MCF 10A (cell line): ENCODE measurements at regions of chr19 and their contacts with region 1.

Region 1: GRCh38 chr19:15264061-15264932 is 32.0 kb upstream of the EPHX3 start:
- DNase-seq: peak; percentile 73
- H3K4me3 Mint-ChIP-seq: no peak overlapping the region
- H3K27ac Mint-ChIP-seq: no peak overlapping the region
- H3K4me1 Mint-ChIP-seq: peaks cover 25% of the 10 kb centered on the region
- H3K27me3 Mint-ChIP-seq: no peaks in the 10 kb centered on the region
- CTCF ChIP-seq: peak; percentile 72

Region 2: GRCh38 chr19:15237759-15238340 is 26.4 kb before region 1 on chr19:
- CTCF ChIA-PET with region 1: no interaction called
- POLR2A ChIA-PET with region 1: no interaction called
- intact Hi-C with region 1: no loop called
- DNase-seq: no peak
- H3K4me3 Mint-ChIP-seq: no peak overlapping the region
- H3K27ac Mint-ChIP-seq: no peak overlapping the region
- H3K4me1 Mint-ChIP-seq: peaks cover 5% of the 10 kb centered on the region
- H3K27me3 Mint-ChIP-seq: no peaks in the 10 kb centered on the region
- CTCF ChIP-seq: no peak

Region 3: GRCh38 chr19:15251749-15252397 is 12.4 kb before region 1 on chr19:
- CTCF ChIA-PET with region 1: interaction called, 25 read pairs
- POLR2A ChIA-PET with region 1: interaction called, 4 read pairs
- intact Hi-C with region 1: no loop called
- DNase-seq: peak; percentile 97
- H3K4me3 Mint-ChIP-seq: no peak overlapping the region
- H3K27ac Mint-ChIP-seq: no peak overlapping the region
- H3K4me1 Mint-ChIP-seq: peaks cover 22% of the 10 kb centered on the region
- H3K27me3 Mint-ChIP-seq: no peaks in the 10 kb centered on the region
- CTCF ChIP-seq: peak; percentile 26

Region 4: DNA sequence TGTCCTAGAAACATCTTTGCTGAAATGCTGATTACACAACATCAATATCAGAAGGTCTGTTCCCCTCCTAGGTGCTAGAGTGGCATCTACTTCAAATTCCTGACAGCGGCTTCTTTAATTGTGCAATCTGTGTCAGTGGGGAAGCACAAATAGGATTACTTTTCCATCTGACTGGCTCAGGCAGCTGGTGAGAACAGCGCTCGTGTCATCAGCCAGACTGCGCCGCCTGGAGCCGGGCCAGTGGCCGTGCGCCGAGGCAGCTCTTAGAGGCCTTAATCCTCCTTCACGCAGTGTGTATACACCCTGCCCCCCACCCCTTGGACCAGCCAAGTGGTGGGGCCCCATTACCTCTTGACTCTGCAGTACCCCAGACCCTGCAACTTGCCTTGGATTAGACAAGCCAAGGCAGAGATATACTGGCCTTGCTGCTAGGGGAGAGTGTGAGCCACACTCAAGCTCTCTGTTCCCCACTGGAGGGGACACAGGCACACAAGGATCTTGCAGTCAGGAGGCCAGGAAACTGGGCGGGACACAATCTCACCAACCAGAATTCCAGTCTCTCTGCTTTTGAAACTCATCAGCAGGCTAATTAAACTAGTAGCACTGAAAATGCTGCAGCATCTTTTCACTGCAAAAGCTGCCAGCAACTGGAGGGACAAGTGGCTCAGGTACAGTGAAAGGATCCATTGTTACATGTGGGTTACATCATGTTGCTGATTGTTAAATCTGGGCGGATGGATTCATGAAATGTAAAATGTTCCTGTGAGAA is 16.8 kb after region 1 on chr19:
- CTCF ChIA-PET with region 1: interaction called, 4 read pairs
- POLR2A ChIA-PET with region 1: interaction called, 10 read pairs
- intact Hi-C with region 1: no loop called
- DNase-seq: peak; percentile 91
- H3K4me3 Mint-ChIP-seq: peak overlapping the region; percentile 17
- H3K27ac Mint-ChIP-seq: peak overlapping the region; percentile 63
- H3K4me1 Mint-ChIP-seq: peaks cover 57% of the 10 kb centered on the region
- H3K27me3 Mint-ChIP-seq: no peaks in the 10 kb centered on the region
- CTCF ChIP-seq: no peak

Region 5: DNA sequence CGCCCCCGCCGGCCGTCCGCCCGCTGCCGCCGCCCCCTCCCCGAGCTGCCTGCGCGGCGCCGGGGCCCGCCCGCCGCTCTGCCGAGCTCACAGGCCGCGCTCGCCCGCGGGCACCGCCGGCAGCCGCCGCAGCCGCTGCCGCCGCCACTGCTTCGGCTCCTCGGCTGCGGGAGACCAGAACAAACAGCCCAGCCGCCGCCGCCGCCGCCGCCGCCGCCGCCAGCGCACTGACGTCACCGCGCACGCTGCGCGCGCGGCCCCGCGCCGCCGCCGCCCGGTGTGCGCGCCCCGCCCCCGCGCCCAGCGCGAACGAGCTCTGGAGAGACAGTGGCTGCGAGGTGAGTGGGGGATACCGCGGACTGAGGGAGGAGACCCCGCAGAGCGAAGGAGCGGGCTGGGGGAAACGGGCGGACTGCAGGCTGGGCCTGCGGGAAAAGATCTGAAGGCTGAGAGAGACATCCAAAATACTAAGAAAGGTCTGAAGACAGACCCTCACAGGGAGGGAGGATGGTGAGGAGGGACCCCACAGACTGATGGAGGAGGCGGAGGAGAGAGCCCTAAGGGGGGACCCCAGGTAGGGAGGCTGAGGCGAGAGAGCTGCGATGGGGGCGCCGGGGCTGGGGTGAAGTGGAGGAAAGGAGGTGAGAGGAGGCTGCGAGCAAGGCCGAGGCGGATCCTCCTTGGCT is 68.2 kb after region 1 on chr19 and contains the start of gene BRD4:
- CTCF ChIA-PET with region 1: no interaction called
- POLR2A ChIA-PET with region 1: interaction called, 4 read pairs
- intact Hi-C with region 1: loop called (anchors 1 kb)
- DNase-seq: peak; percentile 52
- H3K4me3 Mint-ChIP-seq: peak within 1 kb of the TSS; percentile 97
- H3K27ac Mint-ChIP-seq: peak within 1 kb of the TSS; percentile 91
- H3K4me1 Mint-ChIP-seq: peaks cover 9% of the 10 kb centered on the region
- H3K27me3 Mint-ChIP-seq: no peaks in the 10 kb centered on the region
- CTCF ChIP-seq: no peak
- total RNA-seq, gene BRD4: 167 and 189 TPM in 2 replicates

Region 6: GRCh38 chr19:15555759-15556633 is 291.7 kb after region 1 on chr19:
- CTCF ChIA-PET with region 1: no interaction called
- POLR2A ChIA-PET with region 1: no interaction called
- intact Hi-C with region 1: loop called (anchors 2 kb)
- DNase-seq: peak; percentile 90
- H3K4me3 Mint-ChIP-seq: peak overlapping the region; percentile 60
- H3K27ac Mint-ChIP-seq: no peak overlapping the region
- H3K4me1 Mint-ChIP-seq: peaks cover 11% of the 10 kb centered on the region
- H3K27me3 Mint-ChIP-seq: no peaks in the 10 kb centered on the region
- CTCF ChIP-seq: peak; percentile 81

Region 7: DNA sequence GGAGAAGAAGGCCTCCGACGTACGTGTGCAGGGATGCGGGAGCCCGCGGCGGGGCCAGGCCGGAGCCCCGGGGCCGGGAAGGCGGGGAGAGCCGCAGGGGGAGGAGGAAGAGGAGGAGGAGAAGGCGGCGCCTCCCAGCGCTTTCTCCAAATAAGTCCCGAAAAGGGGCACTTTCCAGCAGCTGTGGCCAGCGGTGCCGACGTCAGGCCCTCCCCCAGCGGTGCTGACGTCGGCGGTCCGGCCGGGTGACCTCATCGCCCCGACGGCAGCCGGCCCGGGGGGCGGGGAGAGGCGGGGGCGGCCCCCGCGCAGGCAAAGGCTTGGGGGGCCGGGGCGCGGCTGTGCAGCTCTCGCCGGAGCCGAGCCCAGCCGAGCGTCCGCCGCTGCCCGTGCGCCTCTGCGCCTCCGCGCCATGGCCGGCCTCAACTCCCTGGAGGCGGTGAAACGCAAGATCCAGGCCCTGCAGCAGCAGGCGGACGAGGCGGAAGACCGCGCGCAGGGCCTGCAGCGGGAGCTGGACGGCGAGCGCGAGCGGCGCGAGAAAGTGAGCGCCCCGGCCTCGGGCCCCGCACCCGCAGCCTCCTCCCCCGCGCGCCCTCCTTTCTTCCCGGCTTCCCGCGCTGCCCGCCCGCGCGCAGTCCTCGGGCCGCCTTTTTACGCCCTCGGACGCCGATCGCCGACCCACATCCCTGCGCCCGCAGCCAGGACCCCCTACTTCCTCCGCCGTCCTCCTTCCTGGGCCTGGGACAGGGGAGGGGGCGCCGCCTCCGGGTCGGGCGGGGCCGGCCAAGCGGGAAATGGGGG is 812.1 kb after region 1 on chr19 and contains the start of gene TPM4:
- CTCF ChIA-PET with region 1: no interaction called
- POLR2A ChIA-PET with region 1: no interaction called
- intact Hi-C with region 1: no loop called
- DNase-seq: peak; percentile 94
- H3K4me3 Mint-ChIP-seq: peak within 1 kb of the TSS; percentile 71
- H3K27ac Mint-ChIP-seq: peak within 1 kb of the TSS; percentile 99
- H3K4me1 Mint-ChIP-seq: peaks cover 19% of the 10 kb centered on the region
- H3K27me3 Mint-ChIP-seq: no peaks in the 10 kb centered on the region
- CTCF ChIP-seq: no peak
- total RNA-seq, gene TPM4: 355 and 424 TPM in 2 replicates